Prostate gland (tissue), 2 donors: ENCODE measurements at regions of chr7 and their contacts with region 1.

Region 1: DNA sequence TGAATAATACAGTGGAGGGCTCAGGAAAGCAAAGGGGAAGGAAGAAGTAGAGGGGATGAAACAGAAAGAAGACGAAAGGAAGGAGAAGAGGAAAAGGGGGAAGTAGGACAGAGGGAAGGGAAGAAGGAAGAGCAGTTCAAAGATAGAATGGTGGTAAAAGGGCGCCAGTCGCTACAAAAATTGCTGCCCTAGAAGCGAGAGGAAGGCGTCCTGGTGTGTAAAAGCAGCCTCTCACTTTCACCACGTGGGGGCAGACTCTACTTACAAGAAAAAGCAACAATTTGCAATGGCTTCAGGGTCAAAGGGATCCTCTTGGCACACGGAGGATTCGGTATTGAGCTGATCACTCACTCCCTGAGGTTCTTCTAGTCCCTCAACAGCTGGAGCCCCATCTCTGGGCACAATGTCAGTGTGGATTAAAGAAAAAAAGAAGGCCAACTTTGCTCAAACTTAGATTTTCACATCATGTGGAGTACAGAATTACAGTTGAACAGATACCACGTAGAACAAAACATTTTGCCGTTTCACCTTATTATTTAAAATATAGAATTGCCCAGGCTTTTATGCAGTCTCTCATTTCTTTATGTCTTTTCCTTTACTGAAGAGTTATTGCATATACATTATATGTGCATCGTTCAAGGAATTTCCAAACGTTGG is 31.4 kb upstream of the NPVF start:
- DNase-seq: peak; percentile 50
- H3K4me3 ChIP-seq: no peak overlapping the region
- H3K27ac ChIP-seq: no peak overlapping the region
- H3K4me1 ChIP-seq: no peaks in the 10 kb centered on the region
- H3K27me3 ChIP-seq: no peaks in the 10 kb centered on the region
- CTCF ChIP-seq: peak; percentile 70 to 89 (median 79)
- POLR2A ChIP-seq: no peak

Region 2: GRCh38 chr7:25565949-25566348 is 306.2 kb after region 1 on chr7:
- intact Hi-C with region 1: loop called (anchors 5 kb)
- DNase-seq: peak; percentile 40
- H3K4me3 ChIP-seq: no peak overlapping the region
- H3K27ac ChIP-seq: no peak overlapping the region
- H3K4me1 ChIP-seq: no peaks in the 10 kb centered on the region
- H3K27me3 ChIP-seq: no peaks in the 10 kb centered on the region
- CTCF ChIP-seq: peak; percentile 99 to 100 (median 99)
- POLR2A ChIP-seq: no peak